Activated T-helper 2 cell treated with anti-CD3 and anti-CD28 coated beads, Interferon-gamma antibody, Interleukin-2, Interleukin-4, amounts not matched to agents 10 μg/mL and 5 μg/mL and 100 μg/mL, durations not matched to agents 14 hours and 24 hours and 36 hours (primary cell): ENCODE measurements at regions of chr12 and their contacts with region 1.

Region 1: DNA sequence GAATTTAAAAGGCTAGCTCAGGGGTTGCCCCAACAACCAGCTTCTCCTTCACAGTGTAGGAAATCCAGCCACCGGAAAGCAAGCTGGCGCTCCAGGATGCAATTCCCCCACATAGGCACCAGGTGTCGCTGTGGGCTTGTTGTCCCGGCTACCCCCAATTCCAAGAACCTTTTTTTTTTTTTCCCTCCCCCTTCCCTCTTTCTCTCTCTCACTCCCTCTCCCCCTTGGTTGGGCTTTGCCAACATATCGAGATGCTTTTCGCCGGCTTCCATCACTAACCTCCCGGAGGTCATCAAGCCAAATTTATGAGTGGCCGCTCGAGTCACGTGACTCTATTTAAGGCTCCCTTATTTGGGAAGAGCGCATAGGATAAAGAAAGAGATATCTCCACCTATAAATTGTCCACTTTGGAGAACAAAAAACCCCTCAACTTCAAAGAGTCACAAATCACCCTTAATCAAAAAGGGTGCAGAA is at the start of gene HOXC5:
- DNase-seq: peak; percentile 53
- H3K4me3 Mint-ChIP-seq: no peak within 1 kb of the TSS
- H3K27ac Mint-ChIP-seq: no peak within 1 kb of the TSS
- H3K4me1 Mint-ChIP-seq: peaks cover 7% of the 10 kb centered on the region
- H3K27me3 Mint-ChIP-seq: peaks cover 78% of the 10 kb centered on the region
- total RNA-seq, gene HOXC5: not detected in 2 replicates

Region 2: GRCh38 chr12:53984901-53985709 is 47.6 kb before region 1 on chr12 and contains the start of gene HOXC10:
- intact Hi-C with region 1: loop called (anchors 2 kb)
- DNase-seq: peak; percentile 69
- H3K4me3 Mint-ChIP-seq: peak within 1 kb of the TSS; percentile 7
- H3K27ac Mint-ChIP-seq: no peak within 1 kb of the TSS
- H3K4me1 Mint-ChIP-seq: peaks cover 20% of the 10 kb centered on the region
- H3K27me3 Mint-ChIP-seq: peaks cover 90% of the 10 kb centered on the region
- total RNA-seq, gene HOXC10: not detected in 2 replicates

Region 3: DNA sequence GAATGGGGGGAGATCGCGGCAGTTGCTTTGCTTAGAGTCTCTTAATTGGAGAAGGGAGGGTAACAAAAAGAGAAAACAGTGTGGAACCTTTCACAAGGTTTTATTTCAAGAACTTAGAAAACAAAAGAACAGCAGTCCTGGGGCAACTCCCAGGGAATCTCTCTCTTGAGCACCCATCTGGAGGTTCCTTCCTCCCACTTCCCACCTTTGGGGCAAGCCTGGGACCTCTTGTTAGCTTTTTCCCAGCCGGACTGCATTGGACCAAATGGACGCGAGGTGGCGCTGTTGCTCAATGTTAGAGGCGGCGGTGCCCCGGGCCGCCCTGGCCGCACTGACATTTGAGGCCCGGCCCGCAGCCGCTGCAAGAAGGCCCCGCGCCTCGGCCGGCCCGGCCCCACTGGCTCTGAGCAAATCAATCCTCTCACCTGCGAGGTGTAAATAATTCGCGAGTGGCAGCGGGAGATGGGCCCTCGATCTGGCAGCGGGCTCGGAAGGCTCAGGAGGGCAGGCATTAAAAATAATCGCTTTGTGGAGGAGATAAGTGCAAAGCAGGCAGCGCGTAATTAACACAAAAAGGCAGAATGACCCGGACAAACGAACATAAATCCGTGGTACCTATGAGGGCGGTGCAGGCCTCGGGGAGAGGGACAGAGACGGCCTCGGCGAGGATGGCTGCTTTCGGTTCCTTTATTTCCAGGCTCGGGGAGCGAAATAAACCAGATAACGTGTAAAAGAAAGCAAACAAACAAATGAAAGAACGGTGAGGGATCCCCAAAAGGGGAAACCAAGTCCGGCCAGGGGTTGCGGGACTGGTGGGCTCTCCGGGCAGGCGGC is 26.6 kb before region 1 on chr12:
- intact Hi-C with region 1: loop called (anchors 2 kb)
- DNase-seq: peak; percentile 76
- H3K4me3 Mint-ChIP-seq: peak overlapping the region; percentile 79
- H3K27ac Mint-ChIP-seq: no peak overlapping the region
- H3K4me1 Mint-ChIP-seq: peaks cover 18% of the 10 kb centered on the region
- H3K27me3 Mint-ChIP-seq: peaks cover 92% of the 10 kb centered on the region

Region 4: GRCh38 chr12:54017878-54018467 is 14.7 kb before region 1 on chr12:
- intact Hi-C with region 1: loop called (anchors 1 kb)
- DNase-seq: peak; percentile 67
- H3K4me3 Mint-ChIP-seq: peak overlapping the region; percentile 81
- H3K27ac Mint-ChIP-seq: peak overlapping the region; percentile 18
- H3K4me1 Mint-ChIP-seq: peaks cover 17% of the 10 kb centered on the region
- H3K27me3 Mint-ChIP-seq: peaks cover 75% of the 10 kb centered on the region

Region 5: DNA sequence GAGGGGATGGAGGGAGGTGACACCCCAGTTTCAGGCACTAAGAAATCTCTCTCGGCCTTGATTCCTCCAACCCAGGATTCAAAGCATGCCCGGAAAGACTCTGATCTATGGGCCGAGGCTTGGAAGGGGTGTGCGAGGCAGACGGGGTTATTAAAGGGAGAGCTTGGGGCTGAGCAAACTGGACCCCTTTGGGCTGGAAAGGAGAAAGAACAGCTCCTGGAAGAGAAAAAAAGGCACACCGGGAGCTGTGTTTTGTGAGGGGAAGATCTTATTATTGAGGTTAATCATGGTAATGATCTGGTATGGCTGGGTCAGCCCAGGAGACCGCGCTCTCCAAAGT is 15.3 kb after region 1 on chr12:
- intact Hi-C with region 1: loop called (anchors 2 kb)
- DNase-seq: no peak
- H3K4me3 Mint-ChIP-seq: no peak overlapping the region
- H3K27ac Mint-ChIP-seq: no peak overlapping the region
- H3K4me1 Mint-ChIP-seq: peaks cover 11% of the 10 kb centered on the region
- H3K27me3 Mint-ChIP-seq: peaks cover 95% of the 10 kb centered on the region

Region 6: GRCh38 chr12:54191550-54192022 is 158.9 kb after region 1 on chr12:
- intact Hi-C with region 1: loop called (anchors 1 kb)
- DNase-seq: peak; percentile 66
- H3K4me3 Mint-ChIP-seq: no peak overlapping the region
- H3K27ac Mint-ChIP-seq: no peak overlapping the region
- H3K4me1 Mint-ChIP-seq: peaks cover 20% of the 10 kb centered on the region
- H3K27me3 Mint-ChIP-seq: peaks cover 43% of the 10 kb centered on the region